ENCODE measurements at regions of chr12 and their contacts with region 1.

Region 1: DNA sequence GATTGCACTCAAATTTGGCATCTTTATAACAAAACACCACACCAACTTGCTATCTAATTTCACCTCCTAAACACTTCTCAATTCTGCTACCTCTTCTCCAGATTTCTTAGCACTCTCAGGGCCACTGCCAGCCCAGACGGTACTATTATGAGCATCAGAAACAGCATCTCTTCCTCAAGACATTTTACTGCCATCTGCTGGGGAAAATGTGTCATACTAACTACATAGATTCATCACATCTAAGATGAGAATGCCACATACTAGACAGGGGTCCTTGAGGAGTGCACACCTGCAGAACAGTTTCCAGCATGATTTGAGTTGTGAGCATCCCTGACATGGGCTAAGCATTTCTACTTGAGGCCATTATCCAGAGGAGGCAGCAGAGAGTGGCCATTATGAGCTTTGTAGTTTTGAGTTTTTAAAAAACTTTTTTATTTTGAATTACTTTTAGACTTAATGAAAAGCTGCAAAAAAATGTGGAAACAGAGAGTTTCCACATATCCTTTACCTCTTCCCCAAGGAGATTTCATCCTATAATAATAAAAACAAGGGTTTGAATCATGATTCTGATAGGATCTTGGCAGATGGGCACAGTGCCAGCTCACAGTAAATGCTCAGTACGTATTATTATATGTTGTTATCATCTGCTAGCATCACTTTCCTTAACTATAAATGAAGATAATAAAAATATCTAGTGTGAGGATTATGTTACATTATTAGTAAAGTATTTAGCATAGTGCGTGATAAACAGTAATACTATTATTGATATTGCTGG is 15.2 kb upstream of the GRIP1 start:
- DNase-seq: peak in 3 of 10 donors; percentile 6 to 35 (median 32)
- H3K4me3 ChIP-seq: no peak overlapping the region
- H3K27ac ChIP-seq: no peak overlapping the region
- H3K27me3 ChIP-seq: no peaks in the 10 kb centered on the region
- CTCF ChIP-seq: peak; percentile 56 to 87 (median 75)

Region 2: GRCh38 chr12:66169221-66170170 is 524.6 kb before region 1 on chr12 and contains the start of gene TMBIM4:
- intact Hi-C with region 1: loop called in 1 of 2 experiments (anchors 10 kb)
- DNase-seq: peak; percentile 67 to 88 (median 80)
- H3K4me3 ChIP-seq: peak within 1 kb of the TSS; percentile 59 to 94 (median 82)
- H3K27ac ChIP-seq: peak within 1 kb of the TSS; percentile 93 to 100 (median 99)
- H3K27me3 ChIP-seq: no peaks in the 10 kb centered on the region
- CTCF ChIP-seq: peak; percentile 21 to 72 (median 56)
- total RNA-seq, gene TMBIM4: 18.9 to 70.3 (median 40.0) TPM

Region 3: GRCh38 chr12:66269757-66270383 is 424.2 kb before region 1 on chr12:
- intact Hi-C with region 1: loop called (anchors 5 to 10 kb)
- DNase-seq: peak in 2 of 10 donors; percentile 28 to 36
- H3K4me3 ChIP-seq: peak overlapping the region in 2 of 59 donors; percentile 7 to 11
- H3K27ac ChIP-seq: peak overlapping the region in 13 of 59 donors; percentile 3 to 70 (median 28)
- H3K27me3 ChIP-seq: no peaks in the 10 kb centered on the region
- CTCF ChIP-seq: peak; percentile 55 to 82 (median 73)

Region 4: DNA sequence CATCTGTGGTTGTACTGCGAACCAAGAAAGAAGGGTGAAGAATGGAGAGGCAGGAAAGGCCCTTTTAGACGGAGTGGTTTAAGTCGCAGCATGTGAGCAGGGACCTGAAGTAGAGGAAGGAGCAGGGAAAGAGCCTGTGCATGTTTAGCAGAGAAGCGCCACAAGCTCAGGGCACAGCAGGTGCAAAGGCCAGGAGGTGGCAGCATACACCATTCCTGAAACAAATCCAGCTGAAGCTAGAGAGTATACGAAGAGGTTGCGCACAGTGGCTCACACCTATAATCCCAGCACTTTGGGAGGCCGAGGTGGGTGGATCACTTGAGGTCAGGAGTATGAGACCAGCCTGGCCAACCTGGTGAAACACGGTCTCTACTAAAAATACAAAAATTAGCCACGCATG is 341.9 kb before region 1 on chr12:
- intact Hi-C with region 1: loop called (anchors 5 to 10 kb)
- DNase-seq: peak in 5 of 10 donors; percentile 16 to 43 (median 40)
- H3K4me3 ChIP-seq: no peak overlapping the region
- H3K27ac ChIP-seq: no peak overlapping the region
- H3K27me3 ChIP-seq: no peaks in the 10 kb centered on the region
- CTCF ChIP-seq: peak in 51 of 56 donors; percentile 14 to 65 (median 37)

Region 5: GRCh38 chr12:66409195-66409871 is 284.8 kb before region 1 on chr12:
- intact Hi-C with region 1: loop called in 1 of 2 experiments (anchors 10 kb)
- DNase-seq: no peak
- H3K4me3 ChIP-seq: no peak overlapping the region
- H3K27ac ChIP-seq: no peak overlapping the region
- H3K27me3 ChIP-seq: no peaks in the 10 kb centered on the region
- CTCF ChIP-seq: peak; percentile 42 to 79 (median 66)

Region 6: GRCh38 chr12:66508025-66508424 is 186.1 kb before region 1 on chr12:
- intact Hi-C with region 1: no loop called
- DNase-seq: no peak
- H3K4me3 ChIP-seq: no peak overlapping the region
- H3K27ac ChIP-seq: no peak overlapping the region
- H3K27me3 ChIP-seq: no peaks in the 10 kb centered on the region
- CTCF ChIP-seq: no peak

Region 7: DNA sequence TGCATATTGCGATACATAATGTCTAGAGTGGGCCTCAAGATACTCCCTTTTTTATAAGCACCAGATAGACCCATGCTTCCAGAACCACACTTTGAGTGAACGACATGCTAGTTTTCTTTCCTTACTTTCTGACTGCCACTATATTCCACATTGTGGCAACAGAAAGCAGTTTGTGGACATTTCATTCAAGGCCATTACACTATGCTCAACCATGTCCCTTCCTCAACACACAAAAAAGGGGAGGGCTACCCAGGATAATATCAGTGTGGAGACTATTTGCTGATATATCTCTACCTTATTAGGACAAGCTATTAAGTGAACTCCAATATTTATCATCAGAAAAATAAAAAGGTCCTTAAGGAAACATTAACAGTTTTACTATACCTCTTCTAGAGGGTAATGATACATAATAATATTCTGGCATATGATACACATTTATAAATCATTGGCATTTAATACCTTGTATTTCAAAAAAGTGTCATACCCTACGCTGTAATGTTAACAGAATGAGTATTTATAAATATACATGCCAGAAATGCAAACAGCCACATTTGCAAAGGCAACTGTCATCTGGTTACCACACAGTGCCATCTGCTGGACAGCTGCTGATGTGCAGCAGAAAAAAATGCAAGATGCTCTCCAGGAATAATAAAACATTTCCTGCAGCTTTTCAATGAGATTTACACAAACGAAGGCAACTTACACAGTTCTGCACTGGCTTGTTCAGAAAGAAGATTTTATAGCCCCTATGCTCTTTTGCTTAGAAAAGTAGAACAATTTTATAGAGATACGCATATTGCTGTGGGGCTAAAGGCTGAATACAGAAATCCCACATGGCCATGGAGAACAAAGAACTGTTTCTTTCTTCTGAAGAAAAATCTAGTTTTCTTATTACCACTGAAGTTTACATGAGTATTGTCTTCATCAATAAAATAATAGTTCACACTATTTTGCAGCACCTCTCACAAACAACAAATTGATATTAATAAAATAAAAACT is 167.0 kb after region 1 on chr12:
- intact Hi-C with region 1: loop called in 1 of 2 experiments (anchors 5 kb)
- DNase-seq: peak; percentile 23 to 77 (median 63)
- H3K4me3 ChIP-seq: no peak overlapping the region
- H3K27ac ChIP-seq: no peak overlapping the region
- H3K27me3 ChIP-seq: peaks cover 0 to 3% (median 0%) of the 10 kb centered on the region in 45 donors
- CTCF ChIP-seq: peak; percentile 78 to 97 (median 89)

Measured in dorsolateral prefrontal cortex (tissue), 120 donors.